Activated B cell treated with CpG ODN at 0.5 μM for 24 hours (primary cell): ENCODE measurements at regions of chr9 and their contacts with region 1.

Region 1: DNA sequence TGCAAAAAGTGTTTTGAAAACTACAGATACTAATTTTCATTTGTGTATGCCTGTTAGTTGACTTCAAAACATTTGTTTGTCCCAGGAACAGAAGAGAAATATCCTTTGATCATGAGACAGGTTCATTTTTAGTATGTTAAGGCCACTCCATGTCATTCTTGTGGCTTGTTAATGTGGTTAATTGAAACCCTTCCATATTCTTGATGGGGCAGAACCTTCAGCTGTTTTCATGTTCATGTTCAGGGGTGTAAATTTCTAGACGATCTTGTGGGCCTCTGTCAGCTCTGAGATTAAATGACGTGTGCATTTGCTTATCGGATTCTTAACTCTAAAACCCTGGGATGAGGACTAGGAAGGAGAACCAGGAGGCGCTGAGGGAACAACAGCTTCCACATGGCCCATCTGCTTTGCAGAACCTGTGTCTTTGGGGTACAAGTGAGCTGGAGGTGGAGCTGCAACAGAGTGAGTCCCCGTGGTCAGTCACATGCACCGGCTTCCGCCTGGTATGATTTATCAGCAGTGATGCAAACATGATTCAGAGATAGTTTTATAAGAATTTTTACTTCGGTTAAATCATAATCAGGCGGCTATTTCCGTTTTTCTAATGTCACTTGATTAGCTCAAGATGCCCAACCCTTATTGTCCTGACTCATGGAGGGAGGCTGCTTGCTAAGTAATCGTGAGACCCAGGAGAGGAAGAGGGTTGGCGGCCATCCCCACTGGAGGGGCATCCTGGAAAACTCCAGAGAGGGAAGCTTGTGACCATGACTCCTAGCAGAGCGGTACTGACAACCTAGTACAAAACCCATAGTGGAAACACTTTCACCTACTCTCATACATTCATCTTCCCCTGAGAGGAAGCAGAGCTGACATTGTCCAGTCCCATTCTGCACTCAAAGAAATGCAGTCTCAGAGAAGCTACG is 138.4 kb downstream of the C9orf152 start:
- DNase-seq: no peak
- ATAC-seq: no peak
- H3K4me3 Mint-ChIP-seq: peak overlapping the region; percentile 42
- H3K27ac Mint-ChIP-seq: peak overlapping the region; percentile 7
- H3K4me1 Mint-ChIP-seq: peaks cover 91% of the 10 kb centered on the region
- H3K27me3 Mint-ChIP-seq: no peaks in the 10 kb centered on the region
- CTCF ChIP-seq: no peak

Region 2: DNA sequence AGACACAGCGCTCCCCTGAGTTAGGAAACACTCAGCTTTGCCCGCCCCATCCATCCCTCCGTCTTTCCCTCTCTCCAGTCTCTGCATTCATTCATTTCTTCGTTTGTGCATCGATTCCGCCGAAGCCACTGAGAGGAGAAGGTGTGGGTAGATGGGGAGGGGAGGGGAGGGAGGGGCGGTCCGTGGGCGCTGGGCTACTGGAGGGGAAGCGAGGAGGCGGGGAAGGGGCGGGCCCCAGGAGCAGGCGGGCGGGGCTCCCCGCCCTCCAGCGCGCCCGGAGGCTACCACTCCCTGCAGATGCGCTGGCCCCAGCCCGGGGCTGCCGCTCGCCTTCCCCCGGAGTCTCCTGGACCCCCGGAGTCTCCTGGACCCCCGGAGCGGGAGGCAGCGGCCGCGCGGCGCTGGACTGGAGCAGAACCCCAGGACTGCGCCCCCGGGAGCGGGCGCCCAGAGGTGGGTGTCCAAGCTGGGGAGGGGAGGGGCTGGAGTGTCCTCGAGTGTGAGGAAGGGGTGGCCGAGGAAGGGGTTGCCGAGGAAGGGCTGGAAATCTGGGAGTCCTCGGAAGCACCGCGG is 21.1 kb before region 1 on chr9:
- CTCF ChIA-PET with region 1: interaction called, 3 read pairs
- POLR2A ChIA-PET with region 1: interaction called, 7 read pairs
- intact Hi-C with region 1: loop called (anchors 2 kb)
- DNase-seq: peak; percentile 85
- ATAC-seq: peak; percentile 94
- H3K4me3 Mint-ChIP-seq: peak overlapping the region; percentile 99
- H3K27ac Mint-ChIP-seq: peak overlapping the region; percentile 91
- H3K4me1 Mint-ChIP-seq: peaks cover 54% of the 10 kb centered on the region
- H3K27me3 Mint-ChIP-seq: no peaks in the 10 kb centered on the region
- CTCF ChIP-seq: no peak

Region 3: GRCh38 chr9:110105107-110105506 is 35.5 kb after region 1 on chr9:
- CTCF ChIA-PET with region 1: no interaction called
- POLR2A ChIA-PET with region 1: interaction called, 3 read pairs
- intact Hi-C with region 1: loop called (anchors 5 kb)
- DNase-seq: no peak
- ATAC-seq: no peak
- H3K4me3 Mint-ChIP-seq: no peak overlapping the region
- H3K27ac Mint-ChIP-seq: no peak overlapping the region
- H3K4me1 Mint-ChIP-seq: peaks cover 91% of the 10 kb centered on the region
- H3K27me3 Mint-ChIP-seq: no peaks in the 10 kb centered on the region
- CTCF ChIP-seq: no peak

Region 4: DNA sequence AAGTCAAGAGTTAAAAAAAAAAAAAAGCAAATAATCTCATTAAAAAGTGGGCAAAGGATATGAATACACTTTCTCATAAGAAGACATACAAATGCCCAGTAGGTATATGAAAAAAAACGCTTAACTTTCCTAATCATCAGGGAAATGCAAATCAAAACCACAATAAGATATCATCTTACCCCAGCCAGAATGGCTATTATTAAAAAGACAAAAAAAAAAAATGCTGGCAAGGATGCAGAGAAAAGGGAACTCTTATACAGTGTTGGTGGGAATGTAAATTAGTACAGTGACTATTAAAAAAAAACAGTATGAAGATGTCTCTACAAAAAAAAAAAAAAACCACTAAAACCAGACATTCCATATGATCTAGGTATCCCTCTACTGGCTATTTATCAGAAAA is 889.3 kb after region 1 on chr9:
- CTCF ChIA-PET with region 1: no interaction called
- POLR2A ChIA-PET with region 1: no interaction called
- intact Hi-C with region 1: no loop called
- DNase-seq: no peak
- ATAC-seq: no peak
- H3K4me3 Mint-ChIP-seq: no peak overlapping the region
- H3K27ac Mint-ChIP-seq: no peak overlapping the region
- H3K4me1 Mint-ChIP-seq: no peaks in the 10 kb centered on the region
- H3K27me3 Mint-ChIP-seq: no peaks in the 10 kb centered on the region
- CTCF ChIP-seq: no peak